Spleen (tissue), 13 donors: ENCODE measurements at regions of chr3 and their contacts with region 1.

Region 1: GRCh38 chr3:133384331-133385027 is 15.4 kb upstream of the BFSP2 start:
- DNase-seq: no peak
- H3K4me3 ChIP-seq: no peak overlapping the region
- H3K27ac ChIP-seq: no peak overlapping the region
- H3K4me1 ChIP-seq: peaks cover 0 to 4% (median 0%) of the 10 kb centered on the region in 6 donors
- H3K27me3 ChIP-seq: no peaks in the 10 kb centered on the region
- CTCF ChIP-seq: peak; percentile 36 to 82 (median 76)
- POLR2A ChIP-seq: no peak

Region 2: GRCh38 chr3:133040696-133041523 is 343.6 kb before region 1 on chr3:
- intact Hi-C with region 1: loop called (anchors 5 kb)
- DNase-seq: no peak
- H3K4me3 ChIP-seq: no peak overlapping the region
- H3K27ac ChIP-seq: peak overlapping the region in 1 of 8 donors; percentile 27
- H3K4me1 ChIP-seq: peaks cover 0 to 30% (median 16%) of the 10 kb centered on the region in 6 donors
- H3K27me3 ChIP-seq: peaks cover 0 to 56% (median 36%) of the 10 kb centered on the region in 7 donors
- CTCF ChIP-seq: peak; percentile 10 to 71 (median 55)
- POLR2A ChIP-seq: no peak